Activated CD4-positive, alpha-beta memory T cell treated with anti-CD3 and anti-CD28 coated beads for 36 hours (primary cell): ENCODE measurements at regions of chr9 and their contacts with region 1.

Region 1: DNA sequence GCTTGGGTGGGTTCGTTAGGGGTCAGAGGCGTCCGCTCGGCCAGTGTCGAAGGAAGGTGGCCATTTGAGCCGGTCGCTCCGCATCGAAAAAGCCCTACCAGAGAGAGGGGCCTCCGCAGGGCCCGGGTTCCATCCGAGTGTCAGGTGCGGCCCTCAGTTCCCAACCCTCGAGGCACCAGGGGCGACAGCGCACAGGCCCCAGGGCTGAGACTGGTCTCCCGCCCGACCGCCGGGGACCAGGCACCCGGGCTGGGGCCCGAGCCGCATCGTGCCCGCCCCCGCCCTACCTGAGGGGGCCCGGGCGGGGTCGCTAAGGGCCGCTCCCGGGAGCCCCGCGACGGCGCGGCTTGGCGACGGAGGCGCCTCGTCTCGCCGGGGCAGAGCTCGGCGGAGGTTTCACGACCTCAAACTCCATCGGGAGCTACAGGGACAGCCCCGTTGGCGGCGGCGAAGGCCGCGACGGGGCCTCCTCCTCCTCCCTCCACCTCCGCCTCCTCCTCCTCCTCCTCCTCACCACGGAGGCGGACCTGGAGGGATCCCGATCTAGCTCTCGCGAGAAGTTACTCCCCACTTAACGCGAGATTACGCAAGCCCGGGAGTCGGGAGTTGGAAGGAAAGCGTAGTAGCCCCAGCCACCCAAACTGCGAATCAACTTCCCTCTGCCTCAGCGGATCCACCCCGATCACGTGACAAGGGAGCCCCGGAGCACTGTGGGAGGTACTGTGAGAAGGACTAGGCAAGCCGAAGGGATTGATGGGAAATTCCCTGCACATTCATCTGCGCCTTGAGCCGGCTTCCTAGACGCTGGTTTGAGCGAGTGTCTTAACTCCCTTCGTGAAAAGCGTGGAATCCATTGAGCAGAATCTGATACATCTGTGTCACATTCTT is at the start of gene RC3H2:
- DNase-seq: peak; percentile 98
- H3K4me3 Mint-ChIP-seq: peak within 1 kb of the TSS; percentile 94
- H3K27ac Mint-ChIP-seq: peak within 1 kb of the TSS; percentile 93
- H3K4me1 Mint-ChIP-seq: peaks cover 20% of the 10 kb centered on the region
- H3K27me3 Mint-ChIP-seq: no peaks in the 10 kb centered on the region
- total RNA-seq, gene RC3H2: 27.7 to 27.8 TPM

Region 2: GRCh38 chr9:122827761-122828093 is 77.3 kb before region 1 on chr9:
- CTCF ChIA-PET with region 1: no interaction called
- POLR2A ChIA-PET with region 1: interaction called, 3 read pairs
- intact Hi-C with region 1: loop called (anchors 1 kb)
- DNase-seq: no peak
- H3K4me3 Mint-ChIP-seq: peak overlapping the region; percentile 97
- H3K27ac Mint-ChIP-seq: peak overlapping the region; percentile 81
- H3K4me1 Mint-ChIP-seq: peaks cover 34% of the 10 kb centered on the region
- H3K27me3 Mint-ChIP-seq: no peaks in the 10 kb centered on the region

Region 3: GRCh38 chr9:122846371-122846940 is 58.6 kb before region 1 on chr9:
- CTCF ChIA-PET with region 1: no interaction called
- POLR2A ChIA-PET with region 1: no interaction called
- intact Hi-C with region 1: loop called (anchors 5 kb)
- DNase-seq: no peak
- H3K4me3 Mint-ChIP-seq: no peak overlapping the region
- H3K27ac Mint-ChIP-seq: peak overlapping the region; percentile 74
- H3K4me1 Mint-ChIP-seq: peaks cover 28% of the 10 kb centered on the region
- H3K27me3 Mint-ChIP-seq: no peaks in the 10 kb centered on the region

Region 4: DNA sequence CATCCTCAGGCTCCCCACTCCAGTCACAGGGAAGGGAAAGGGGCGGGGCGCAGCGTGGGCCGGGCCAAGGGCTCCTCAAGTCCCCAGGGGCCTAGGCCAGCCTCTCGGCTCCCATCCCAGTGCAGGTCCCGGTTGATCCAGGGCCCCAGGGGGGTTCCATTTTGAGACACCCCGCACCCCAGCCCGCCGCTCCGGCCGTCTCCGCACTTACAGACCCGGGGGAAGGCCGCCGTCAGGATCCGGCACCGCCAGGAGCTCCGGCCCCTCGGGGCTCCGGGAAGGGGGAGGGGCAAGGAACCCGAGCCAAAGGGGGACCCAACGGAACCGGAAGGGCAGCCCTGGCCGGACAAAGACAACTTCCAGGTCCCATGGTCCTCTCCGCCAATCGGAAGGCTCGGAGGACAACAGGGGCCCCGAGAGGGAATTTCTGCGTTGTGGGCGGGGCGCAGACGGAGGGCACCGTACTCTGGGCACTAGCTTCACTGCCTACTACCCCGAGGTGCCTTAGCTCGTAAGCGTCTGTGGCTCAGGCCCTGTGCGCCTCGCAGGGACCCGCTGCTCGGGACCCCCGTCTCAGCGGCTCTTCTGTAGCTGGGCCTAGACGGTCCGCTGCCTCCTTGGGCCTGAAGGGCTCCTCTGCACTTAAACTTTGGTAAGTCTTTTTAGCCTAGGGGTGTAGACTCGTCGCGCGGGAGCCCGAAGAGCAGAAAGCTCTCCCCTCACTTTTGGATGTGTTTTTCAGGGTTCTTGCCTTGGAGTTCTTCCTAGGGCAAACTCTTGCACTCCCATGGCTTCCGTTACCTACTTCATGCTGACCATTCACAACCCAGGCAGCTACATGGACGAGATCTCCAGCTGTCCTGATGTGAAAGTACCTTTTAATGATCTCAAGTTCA is 26.4 kb after region 1 on chr9 and contains the start of gene ZBTB26:
- CTCF ChIA-PET with region 1: interaction called, 9 read pairs
- POLR2A ChIA-PET with region 1: interaction called, 11 read pairs
- intact Hi-C with region 1: loop called (anchors 1 kb)
- DNase-seq: peak; percentile 95
- H3K4me3 Mint-ChIP-seq: no peak within 1 kb of the TSS
- H3K27ac Mint-ChIP-seq: peak within 1 kb of the TSS; percentile 92
- H3K4me1 Mint-ChIP-seq: peaks cover 13% of the 10 kb centered on the region
- H3K27me3 Mint-ChIP-seq: no peaks in the 10 kb centered on the region
- total RNA-seq, gene ZBTB26: 6.1 to 6.4 TPM

Region 5: GRCh38 chr9:122940603-122941559 is 35.8 kb after region 1 on chr9 and contains the start of gene RABGAP1:
- CTCF ChIA-PET with region 1: interaction called, 3 read pairs
- POLR2A ChIA-PET with region 1: interaction called, 11 read pairs
- intact Hi-C with region 1: loop called (anchors 1 kb)
- DNase-seq: peak; percentile 99
- H3K4me3 Mint-ChIP-seq: peak within 1 kb of the TSS; percentile 94
- H3K27ac Mint-ChIP-seq: peak within 1 kb of the TSS; percentile 84
- H3K4me1 Mint-ChIP-seq: peaks cover 35% of the 10 kb centered on the region
- H3K27me3 Mint-ChIP-seq: no peaks in the 10 kb centered on the region
- total RNA-seq, gene RABGAP1: 27.1 to 28.8 TPM

Region 6: DNA sequence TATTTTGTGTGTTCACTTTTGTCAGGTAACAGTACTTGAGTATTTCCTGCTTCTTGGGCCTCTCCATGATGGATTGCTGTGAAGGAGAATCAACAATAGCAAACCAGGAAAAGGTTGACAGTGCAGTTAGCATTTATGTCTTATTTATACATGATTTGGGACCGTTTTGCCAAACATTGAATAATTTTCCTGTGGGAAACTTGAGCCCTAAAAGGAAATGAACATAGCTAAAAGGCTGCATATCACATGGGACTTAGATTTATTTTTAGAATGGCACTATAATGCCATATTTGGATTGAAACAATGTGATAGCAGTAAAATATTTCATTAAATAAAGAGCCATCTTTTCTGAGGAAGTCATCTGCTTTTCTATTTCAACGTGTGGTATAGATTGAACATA is 143.7 kb after region 1 on chr9:
- CTCF ChIA-PET with region 1: no interaction called
- POLR2A ChIA-PET with region 1: no interaction called
- intact Hi-C with region 1: no loop called
- DNase-seq: no peak
- H3K4me3 Mint-ChIP-seq: no peak overlapping the region
- H3K27ac Mint-ChIP-seq: no peak overlapping the region
- H3K4me1 Mint-ChIP-seq: no peaks in the 10 kb centered on the region
- H3K27me3 Mint-ChIP-seq: no peaks in the 10 kb centered on the region